H1 (cell line): ENCODE measurements at regions of chr12 and their contacts with region 1.

Region 1: DNA sequence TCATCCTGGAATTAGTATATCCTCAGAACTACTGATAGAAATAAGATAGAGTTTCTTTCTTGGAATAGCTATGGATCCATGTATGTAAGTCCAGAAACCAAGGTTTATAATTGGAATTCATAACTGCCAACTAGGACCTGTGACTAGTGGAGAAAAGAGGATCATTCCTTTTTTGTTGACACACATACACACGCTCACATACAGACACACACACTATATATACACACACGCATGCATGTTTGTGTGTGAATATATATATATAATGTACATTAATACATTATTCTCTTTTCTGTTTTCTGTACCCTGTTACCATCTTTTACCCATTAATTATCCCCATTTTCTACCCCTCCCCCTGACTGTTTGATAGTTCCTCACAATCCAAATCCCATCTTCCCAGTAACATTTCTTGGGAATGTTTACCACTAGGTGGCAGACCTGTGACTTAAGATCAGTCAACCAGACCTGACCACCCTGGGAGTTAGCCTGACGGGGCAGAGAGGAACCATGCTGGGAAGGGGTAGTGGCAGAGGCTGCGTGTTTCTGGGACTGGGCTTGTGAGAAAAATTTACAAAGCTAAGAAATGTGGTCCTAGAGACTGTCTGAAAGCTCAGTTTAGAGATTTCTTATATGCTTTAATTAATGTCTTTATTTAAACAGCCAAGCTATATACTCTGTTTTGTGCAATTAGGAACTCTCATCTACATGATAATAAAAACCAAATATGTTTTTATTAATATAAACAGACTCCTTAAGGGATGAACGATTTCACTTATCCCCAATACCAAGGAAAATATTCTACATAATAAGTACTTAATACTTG is 308.0 kb downstream of the PPFIA2 start:
- DNase-seq: peak; percentile 25 to 49
- H3K4me3 ChIP-seq: no peak overlapping the region
- H3K27ac ChIP-seq: no peak overlapping the region
- H3K4me1 ChIP-seq: no peaks in the 10 kb centered on the region
- H3K27me3 ChIP-seq: no peaks in the 10 kb centered on the region
- CTCF ChIP-seq: peak; percentile 14 to 69 (median 68)
- EP300 ChIP-seq: no peak
- POLR2A ChIP-seq: no peak
- RAD21 ChIP-seq: peak; percentile 67 to 77

Region 2: DNA sequence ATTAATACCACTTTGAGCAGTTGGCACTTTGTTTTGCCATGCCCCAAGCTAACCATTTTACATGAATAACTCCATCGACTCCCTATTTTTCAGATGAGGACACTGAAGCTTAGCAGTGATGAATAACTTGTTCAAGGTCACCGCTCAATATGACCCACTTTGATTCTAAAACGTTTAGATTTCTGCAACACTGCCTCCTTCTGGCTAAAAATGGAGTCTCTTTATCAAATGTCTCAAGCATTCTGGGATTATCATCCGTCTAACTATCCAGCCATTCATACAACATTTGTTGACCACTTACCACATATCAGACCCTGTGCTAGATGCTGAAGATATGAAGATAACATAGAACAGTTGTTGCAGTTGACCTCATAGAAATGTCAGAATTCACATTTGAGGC is 10.0 kb after region 1 on chr12:
- CTCF ChIA-PET with region 1: interaction called, 12 read pairs
- POLR2A ChIA-PET with region 1: no interaction called
- DNase-seq: no peak
- H3K4me3 ChIP-seq: no peak overlapping the region
- H3K27ac ChIP-seq: no peak overlapping the region
- H3K4me1 ChIP-seq: no peaks in the 10 kb centered on the region
- H3K27me3 ChIP-seq: no peaks in the 10 kb centered on the region
- CTCF ChIP-seq: peak in 1 of 3 experiments; percentile 56; a peak in 2 of 4 replicates
- EP300 ChIP-seq: no peak
- POLR2A ChIP-seq: no peak
- RAD21 ChIP-seq: peak in 1 of 2 experiments; percentile 25; a peak in 1 of 4 replicates

Region 3: GRCh38 chr12:81627336-81628189 is 176.4 kb after region 1 on chr12:
- CTCF ChIA-PET with region 1: interaction called, 21 read pairs
- POLR2A ChIA-PET with region 1: no interaction called
- DNase-seq: no peak
- H3K4me3 ChIP-seq: no peak overlapping the region
- H3K27ac ChIP-seq: no peak overlapping the region
- H3K4me1 ChIP-seq: no peaks in the 10 kb centered on the region
- H3K27me3 ChIP-seq: no peaks in the 10 kb centered on the region
- CTCF ChIP-seq: peak in 2 of 3 experiments; percentile 34 to 54; a peak in 2 of 4 replicates
- EP300 ChIP-seq: no peak
- POLR2A ChIP-seq: no peak
- RAD21 ChIP-seq: peak; percentile 68 to 70